Sigmoid colon (tissue), 7 donors: ENCODE measurements at regions of chr2 and their contacts with region 1.

Region 1: DNA sequence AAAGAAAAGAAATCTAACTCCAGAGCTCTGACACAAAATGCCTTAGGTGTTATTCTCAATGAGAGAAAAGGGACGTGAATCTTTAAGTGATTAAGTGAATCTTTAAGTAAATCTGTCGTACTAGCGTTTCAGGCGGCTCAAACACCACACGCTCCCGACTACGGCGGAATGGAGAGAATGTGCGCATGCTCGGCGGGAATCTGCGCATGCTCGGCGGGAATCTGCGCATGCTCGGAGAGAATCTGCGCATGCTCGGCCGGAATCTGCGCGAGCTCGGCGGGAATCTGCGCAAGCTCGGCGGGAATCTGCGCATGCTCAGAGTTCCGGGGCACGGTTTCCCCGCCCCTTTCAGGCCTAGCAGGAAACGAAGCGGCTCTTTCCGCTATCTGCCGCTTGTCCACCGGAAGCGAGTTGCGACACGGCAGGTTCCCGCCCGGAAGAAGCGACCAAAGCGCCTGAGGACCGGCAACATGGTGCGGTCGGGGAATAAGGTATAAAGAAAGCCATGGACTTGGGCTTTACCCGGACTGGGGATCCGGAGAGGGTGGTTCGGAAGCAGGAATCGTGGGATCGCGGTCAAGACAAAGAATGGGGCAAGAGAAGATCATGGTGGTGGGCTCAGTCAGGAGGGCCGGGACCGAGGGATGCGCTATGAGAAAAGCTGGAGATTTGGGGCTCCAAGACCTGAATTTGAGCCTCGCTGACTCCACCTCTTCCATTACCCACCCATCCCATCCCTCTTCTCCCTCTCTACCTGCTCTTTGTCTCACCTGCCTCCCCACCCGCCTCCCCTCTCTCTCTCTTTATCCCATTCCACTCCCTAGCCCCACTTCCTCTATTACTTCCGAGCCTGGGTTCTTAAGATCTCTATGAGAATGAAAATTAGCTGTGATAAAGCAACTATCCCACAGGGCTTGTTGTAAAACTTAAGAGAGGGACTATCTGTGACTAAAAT is at the start of gene XRCC5:
- DNase-seq: peak; percentile 98
- H3K4me3 ChIP-seq: peak within 1 kb of the TSS; percentile 68 to 93 (median 88)
- H3K27ac ChIP-seq: peak within 1 kb of the TSS; percentile 90 to 95 (median 92)
- H3K4me1 ChIP-seq: peaks cover 0 to 28% (median 23%) of the 10 kb centered on the region in 4 donors
- H3K27me3 ChIP-seq: no peaks in the 10 kb centered on the region
- CTCF ChIP-seq: no peak
- EP300 ChIP-seq: no peak
- POLR2A ChIP-seq: peak in 1 of 2 donors; percentile 48
- total RNA-seq, gene XRCC5: 92.5 to 152 (median 137) TPM

Region 2: DNA sequence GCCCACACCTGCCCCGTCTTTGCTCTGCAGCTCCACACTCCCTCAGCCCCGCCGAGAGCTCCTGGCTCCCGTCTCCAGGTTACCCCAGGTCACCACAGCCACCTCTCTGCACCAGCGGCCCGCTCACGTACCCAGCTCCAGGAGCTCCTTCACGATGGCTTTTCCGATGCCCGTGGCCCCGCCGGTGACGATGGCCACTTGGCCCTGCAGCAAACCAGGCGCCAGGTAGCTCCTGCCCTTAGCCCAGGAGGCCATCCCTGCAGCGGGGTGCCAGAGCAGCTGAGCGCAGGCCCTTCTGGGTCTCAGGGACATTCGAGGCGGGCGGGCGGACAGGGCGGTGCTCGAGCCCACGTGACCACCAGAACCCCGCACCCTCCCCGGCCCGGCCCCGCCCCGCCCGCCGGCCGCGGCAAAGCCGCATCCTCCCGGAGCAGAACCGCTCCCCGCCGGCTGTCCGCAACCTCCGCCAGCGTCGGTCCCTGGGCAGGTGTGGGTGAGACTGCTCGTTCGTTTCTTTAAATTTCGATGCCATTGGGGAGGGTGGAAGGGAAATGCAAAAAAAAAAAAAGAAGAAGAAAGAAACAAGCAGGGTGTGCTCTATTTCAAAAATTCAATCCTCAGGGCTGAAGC is 27.6 kb before region 1 on chr2 and contains the starts of genes PECR and TMEM169:
- intact Hi-C with region 1: loop called (anchors 1 kb)
- DNase-seq: peak; percentile 90
- H3K4me3 ChIP-seq: peak within 1 kb of the TSS; percentile 63 to 66 (median 64)
- H3K27ac ChIP-seq: peak within 1 kb of the TSS; percentile 31 to 57 (median 54)
- H3K4me1 ChIP-seq: peaks cover 0 to 19% (median 14%) of the 10 kb centered on the region in 4 donors
- H3K27me3 ChIP-seq: no peaks in the 10 kb centered on the region
- CTCF ChIP-seq: no peak
- EP300 ChIP-seq: no peak
- POLR2A ChIP-seq: no peak
- total RNA-seq, gene PECR: 5.0 to 13.9 (median 10.3) TPM
- total RNA-seq, gene TMEM169: 0.82 to 1.4 (median 1.1) TPM in 3 of 4 donors, not detected in the other